ENCODE measurements at regions of chr2 and their contacts with region 1.

Region 1: DNA sequence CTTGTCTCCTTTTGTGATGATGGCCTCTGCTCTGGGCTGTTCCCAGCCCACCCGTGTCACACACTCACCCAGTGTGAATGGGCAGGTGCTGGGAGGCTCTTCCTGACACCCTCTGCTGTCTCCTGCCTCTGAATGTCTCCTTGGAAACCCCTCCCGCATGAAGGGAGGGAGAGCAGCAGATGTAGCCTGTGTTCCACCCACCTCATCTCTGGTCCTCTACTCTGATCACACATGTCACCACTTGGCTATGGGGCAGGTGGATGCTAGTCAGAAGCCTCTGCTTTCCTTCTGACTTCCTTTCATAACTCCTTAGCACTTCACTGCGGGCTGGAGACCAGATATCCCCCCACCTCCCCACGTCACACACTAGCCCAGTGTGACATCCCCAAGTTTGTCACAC is 23.9 kb downstream of the EFR3B start:
- DNase-seq: no peak
- ATAC-seq: no peak
- H3K4me3 ChIP-seq: no peak overlapping the region
- H3K4me3 Mint-ChIP-seq: no peak overlapping the region
- H3K27ac ChIP-seq: no peak overlapping the region
- H3K27ac Mint-ChIP-seq: no peak overlapping the region
- H3K4me1 ChIP-seq: no peaks in the 10 kb centered on the region
- H3K4me1 Mint-ChIP-seq: no peaks in the 10 kb centered on the region
- H3K27me3 ChIP-seq: no peaks in the 10 kb centered on the region
- H3K27me3 Mint-ChIP-seq: no peaks in the 10 kb centered on the region
- CTCF ChIP-seq: no peak

Region 2: DNA sequence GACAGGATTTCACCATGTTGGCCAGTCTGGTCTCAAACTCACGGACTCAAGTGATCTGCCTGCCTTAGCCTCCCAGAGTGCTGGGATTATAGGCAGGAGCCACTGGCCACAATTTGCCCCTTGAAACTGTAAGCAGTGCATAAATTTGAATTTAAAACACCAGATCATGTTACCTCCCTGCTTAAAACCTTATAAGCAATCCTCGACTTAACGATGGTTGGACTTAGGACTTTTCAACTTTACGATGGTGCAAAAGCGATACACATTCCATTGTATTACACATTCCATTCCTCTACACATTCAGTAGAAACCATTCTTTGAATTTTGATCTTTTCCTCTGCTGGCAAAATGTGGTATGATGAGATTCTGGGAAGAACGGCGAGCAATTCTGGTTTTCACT is 47.1 kb before region 1 on chr2:
- CTCF ChIA-PET with region 1: no interaction called
- POLR2A ChIA-PET with region 1: no interaction called
- intact Hi-C with region 1: loop called in 1 of 2 experiments (anchors 5 kb)
- DNase-seq: no peak
- ATAC-seq: no peak
- H3K4me3 ChIP-seq: no peak overlapping the region
- H3K4me3 Mint-ChIP-seq: no peak overlapping the region
- H3K27ac ChIP-seq: no peak overlapping the region
- H3K27ac Mint-ChIP-seq: no peak overlapping the region
- H3K4me1 ChIP-seq: no peaks in the 10 kb centered on the region
- H3K4me1 Mint-ChIP-seq: no peaks in the 10 kb centered on the region
- H3K27me3 ChIP-seq: no peaks in the 10 kb centered on the region
- H3K27me3 Mint-ChIP-seq: no peaks in the 10 kb centered on the region
- CTCF ChIP-seq: no peak

Region 3: DNA sequence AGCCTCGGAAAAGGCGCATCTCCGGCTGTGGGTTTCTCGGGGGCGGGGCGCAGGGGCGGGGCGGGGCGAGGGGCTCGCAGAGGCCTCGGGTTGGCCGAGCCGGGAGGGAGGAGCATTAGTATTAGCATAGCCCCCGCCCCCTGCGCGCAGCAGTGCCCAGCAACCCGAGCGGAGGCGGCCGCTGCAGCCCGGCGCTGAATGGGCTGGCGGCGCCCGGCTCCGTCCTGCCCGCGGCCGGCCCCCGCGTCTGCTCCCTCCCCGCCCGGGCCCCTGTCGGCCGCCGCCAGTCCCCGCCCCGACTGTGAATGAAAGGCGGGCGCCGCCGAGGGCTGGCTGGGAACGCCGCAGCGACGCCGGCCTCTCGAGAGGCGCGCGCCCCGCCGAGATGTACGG is 23.8 kb before region 1 on chr2 and contains the start of gene EFR3B:
- CTCF ChIA-PET with region 1: no interaction called
- POLR2A ChIA-PET with region 1: no interaction called
- intact Hi-C with region 1: no loop called
- DNase-seq: peak; percentile 74 to 95 (median 86)
- ATAC-seq: peak; percentile 91
- H3K4me3 ChIP-seq: peak within 1 kb of the TSS; percentile 58
- H3K4me3 Mint-ChIP-seq: peak within 1 kb of the TSS; percentile 90
- H3K27ac ChIP-seq: no peak within 1 kb of the TSS
- H3K27ac Mint-ChIP-seq: no peak within 1 kb of the TSS
- H3K4me1 ChIP-seq: peaks cover 22% of the 10 kb centered on the region
- H3K4me1 Mint-ChIP-seq: peaks cover 24% of the 10 kb centered on the region
- H3K27me3 ChIP-seq: peaks cover 38 to 39% of the 10 kb centered on the region in 2 experiments
- H3K27me3 Mint-ChIP-seq: peaks cover 40% of the 10 kb centered on the region
- CTCF ChIP-seq: no peak
- total RNA-seq, gene EFR3B: 0.11 TPM in 1 of 2 experiments, not detected in the other

Measured in CD4-positive, alpha-beta T cell (primary cell).